ENCODE measurements at regions of chr13 and their contacts with region 1.

Region 1: DNA sequence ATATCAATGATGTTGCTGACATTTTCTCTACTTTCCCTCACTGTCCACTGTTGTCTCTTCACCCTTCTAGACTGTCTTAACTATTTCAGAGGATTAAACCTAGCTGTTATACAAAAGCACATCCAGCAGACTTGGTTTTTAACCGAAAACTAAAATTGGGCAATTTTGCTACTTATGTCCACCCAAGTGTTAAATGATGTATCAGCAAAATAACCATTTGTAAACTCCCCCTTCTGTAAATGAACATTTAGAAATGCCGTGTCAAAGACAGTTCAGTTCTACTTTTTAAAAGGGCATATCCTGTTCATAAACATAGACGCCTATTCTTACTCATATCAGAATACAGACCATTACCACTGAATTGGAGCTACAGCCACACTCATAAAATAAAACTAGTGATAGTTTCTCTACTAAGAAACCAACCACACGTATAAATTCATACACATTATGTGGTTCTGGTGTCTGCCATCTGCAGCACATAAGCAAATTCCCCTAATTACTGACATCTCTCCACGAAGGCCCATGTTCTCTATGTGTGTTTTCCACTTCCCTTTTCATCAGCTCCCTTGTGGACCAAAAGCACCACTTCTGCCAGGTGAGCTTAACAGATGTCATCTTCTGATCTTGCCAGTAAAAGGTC is 1091.8 kb downstream of the PCDH9 start:
- DNase-seq: no peak
- H3K4me3 ChIP-seq: no peak overlapping the region
- H3K27ac ChIP-seq: no peak overlapping the region
- H3K4me1 ChIP-seq: no peaks in the 10 kb centered on the region
- H3K27me3 ChIP-seq: no peaks in the 10 kb centered on the region
- CTCF ChIP-seq: no peak
- POLR2A ChIP-seq: no peak

Region 2: DNA sequence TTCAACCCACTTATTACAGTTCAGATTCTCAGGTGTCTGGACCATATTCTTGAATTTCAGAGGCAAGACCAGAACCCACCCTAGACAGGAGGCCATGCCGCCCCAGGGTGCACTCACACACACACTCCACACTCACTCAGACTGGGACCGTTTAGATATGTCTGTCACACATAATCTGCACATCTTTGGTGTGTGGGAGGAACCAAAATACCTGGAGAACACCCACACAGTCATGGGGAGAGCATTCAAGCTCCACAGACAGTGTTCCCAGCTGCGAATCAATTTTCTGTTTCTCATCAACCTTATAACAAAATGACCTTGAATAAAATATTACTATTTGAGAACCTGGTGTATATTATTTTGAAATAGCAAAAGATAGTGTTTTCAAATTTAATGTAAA is 1261.1 kb before region 1 on chr13:
- intact Hi-C with region 1: no loop called
- DNase-seq: no peak
- H3K4me3 ChIP-seq: no peak overlapping the region
- H3K27ac ChIP-seq: no peak overlapping the region
- H3K4me1 ChIP-seq: no peaks in the 10 kb centered on the region
- H3K27me3 ChIP-seq: no peaks in the 10 kb centered on the region
- CTCF ChIP-seq: no peak
- POLR2A ChIP-seq: no peak

Region 3: DNA sequence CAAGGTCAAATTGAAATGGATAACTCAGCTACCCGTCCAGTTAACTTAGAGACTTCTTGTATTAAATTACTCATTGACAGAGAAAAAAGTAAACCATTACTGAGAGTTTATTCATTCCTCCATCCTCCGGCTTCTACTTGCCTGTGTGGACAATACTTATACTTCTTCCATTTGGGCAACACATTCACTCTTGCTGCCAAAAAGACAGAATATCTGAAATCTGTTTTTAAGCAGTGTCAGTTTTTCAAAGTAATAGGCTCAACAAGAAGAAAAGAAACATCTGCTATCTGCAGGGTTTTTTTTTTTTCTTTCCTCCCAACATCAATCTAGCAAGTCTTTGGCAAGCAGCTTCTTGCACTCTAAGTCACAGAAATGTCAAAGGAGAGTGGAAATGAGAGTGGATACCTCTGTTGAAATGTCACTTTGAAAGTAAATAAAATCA is 51.0 kb before region 1 on chr13:
- intact Hi-C with region 1: no loop called
- DNase-seq: no peak
- H3K4me3 ChIP-seq: no peak overlapping the region
- H3K27ac ChIP-seq: no peak overlapping the region
- H3K4me1 ChIP-seq: no peaks in the 10 kb centered on the region
- H3K27me3 ChIP-seq: no peaks in the 10 kb centered on the region
- CTCF ChIP-seq: no peak
- POLR2A ChIP-seq: no peak

Region 4: DNA sequence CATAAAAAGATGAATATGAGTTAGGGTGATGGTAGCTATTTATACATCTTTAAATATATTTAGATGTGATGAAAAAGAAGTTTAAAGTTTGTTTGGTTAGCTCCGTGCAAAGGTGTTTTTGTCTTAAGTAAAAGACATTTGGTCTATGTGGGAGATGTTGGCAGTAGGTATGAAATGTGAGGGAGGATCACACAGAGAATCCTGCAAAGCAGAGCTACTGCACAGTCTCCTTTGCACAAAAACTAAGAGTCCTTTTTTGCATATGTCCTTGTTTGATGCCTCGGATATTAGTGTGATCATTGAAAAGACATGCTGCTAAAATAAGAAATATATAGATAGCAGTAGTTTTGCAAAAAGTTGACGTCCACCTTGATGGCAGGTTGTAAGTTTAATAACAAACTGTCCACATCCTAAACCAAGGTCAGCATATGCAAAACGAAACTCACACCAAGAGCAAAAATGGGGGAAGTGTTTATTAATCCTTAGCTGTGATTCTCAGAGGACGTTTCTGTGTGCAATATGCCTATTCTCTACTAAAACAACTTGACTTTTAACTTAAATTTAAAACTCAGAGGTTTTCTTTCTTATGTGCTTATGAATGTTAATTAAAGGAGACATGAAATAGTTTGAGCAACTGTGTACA is 221.7 kb after region 1 on chr13:
- intact Hi-C with region 1: loop called (anchors 5 kb)
- DNase-seq: no peak
- H3K4me3 ChIP-seq: no peak overlapping the region
- H3K27ac ChIP-seq: no peak overlapping the region
- H3K4me1 ChIP-seq: no peaks in the 10 kb centered on the region
- H3K27me3 ChIP-seq: no peaks in the 10 kb centered on the region
- CTCF ChIP-seq: no peak
- POLR2A ChIP-seq: no peak

Measured in breast epithelium (tissue), 4 donors.